Caco-2 (cell line): ENCODE measurements at regions of chr2 and their contacts with region 1.

Region 1: GRCh38 chr2:27211829-27212627 is at the starts of genes ATRAID and SLC5A6:
- DNase-seq: peak; percentile 92 to 96
- H3K4me3 ChIP-seq: peak within 1 kb of the TSS; percentile 58
- H3K4me3 Mint-ChIP-seq: peak within 1 kb of the TSS; percentile 98
- H3K27ac Mint-ChIP-seq: peak within 1 kb of the TSS; percentile 100
- H3K4me1 ChIP-seq: peaks cover 30% of the 10 kb centered on the region
- H3K4me1 Mint-ChIP-seq: peaks cover 29% of the 10 kb centered on the region
- H3K27me3 ChIP-seq: no peaks in the 10 kb centered on the region
- H3K27me3 Mint-ChIP-seq: no peaks in the 10 kb centered on the region
- CTCF ChIP-seq: no peak
- total RNA-seq, gene ATRAID: 150 and 157 TPM in 2 replicates
- total RNA-seq, gene SLC5A6: 93.7 and 98.2 TPM in 2 replicates

Region 2: GRCh38 chr2:26993768-26994167 is 218.3 kb before region 1 on chr2:
- CTCF ChIA-PET with region 1: no interaction called
- POLR2A ChIA-PET with region 1: interaction called, 11 read pairs
- intact Hi-C with region 1: no loop called
- DNase-seq: peak in 1 of 2 experiments; percentile 24
- H3K4me3 ChIP-seq: no peak overlapping the region
- H3K4me3 Mint-ChIP-seq: no peak overlapping the region
- H3K27ac Mint-ChIP-seq: no peak overlapping the region
- H3K4me1 ChIP-seq: 0 out of 2 replicates have a peak, but pooled peaks cover 6% of the 10 kb centered on the region
- H3K4me1 Mint-ChIP-seq: peaks cover 8% of the 10 kb centered on the region
- H3K27me3 ChIP-seq: no peaks in the 10 kb centered on the region
- H3K27me3 Mint-ChIP-seq: no peaks in the 10 kb centered on the region
- CTCF ChIP-seq: no peak

Region 3: DNA sequence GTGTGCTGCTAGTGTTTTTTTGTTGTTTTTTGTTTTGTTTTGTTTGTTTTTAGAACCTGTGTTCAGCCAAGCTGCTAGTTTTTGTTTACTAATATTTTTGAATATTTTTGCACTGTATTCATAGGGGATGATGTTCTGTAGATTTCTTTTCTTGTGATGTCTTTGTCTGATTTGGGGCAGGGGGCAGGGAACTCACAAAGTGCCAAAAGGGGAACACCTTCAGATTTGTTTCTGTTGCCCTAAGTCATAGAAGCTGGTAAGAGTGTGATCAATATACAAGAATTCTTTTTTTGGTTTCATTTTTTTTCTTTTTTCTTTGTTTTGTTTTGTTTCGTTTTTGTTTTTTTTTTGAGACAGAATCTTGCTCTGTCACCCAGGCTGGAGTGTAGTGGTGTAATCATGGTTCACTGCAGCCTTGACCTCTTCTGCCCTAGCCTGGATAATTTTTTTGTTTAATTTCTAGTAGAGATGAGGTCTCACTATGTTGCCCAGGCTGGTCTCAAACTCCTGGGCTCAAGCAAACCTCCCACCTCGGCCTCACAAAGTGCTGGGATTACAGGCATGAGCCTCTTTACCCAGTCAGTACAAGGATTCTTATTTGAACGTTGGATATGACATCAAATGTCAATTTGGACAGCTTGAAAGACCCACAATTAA is 32.6 kb before region 1 on chr2:
- CTCF ChIA-PET with region 1: no interaction called
- POLR2A ChIA-PET with region 1: interaction called, 15 read pairs
- intact Hi-C with region 1: no loop called
- DNase-seq: no peak
- H3K4me3 ChIP-seq: no peak overlapping the region
- H3K4me3 Mint-ChIP-seq: no peak overlapping the region
- H3K27ac Mint-ChIP-seq: no peak overlapping the region
- H3K4me1 ChIP-seq: peaks cover 5% of the 10 kb centered on the region
- H3K4me1 Mint-ChIP-seq: peaks cover 8% of the 10 kb centered on the region
- H3K27me3 ChIP-seq: no peaks in the 10 kb centered on the region
- H3K27me3 Mint-ChIP-seq: no peaks in the 10 kb centered on the region
- CTCF ChIP-seq: no peak

Region 4: GRCh38 chr2:27356382-27357181 is 144.6 kb after region 1 on chr2 and contains the start of gene GTF3C2:
- CTCF ChIA-PET with region 1: no interaction called
- POLR2A ChIA-PET with region 1: no interaction called
- intact Hi-C with region 1: loop called (anchors 2 kb)
- DNase-seq: peak; percentile 99
- H3K4me3 ChIP-seq: peak within 1 kb of the TSS; percentile 60
- H3K4me3 Mint-ChIP-seq: peak within 1 kb of the TSS; percentile 92
- H3K27ac Mint-ChIP-seq: peak within 1 kb of the TSS; percentile 98
- H3K4me1 ChIP-seq: peaks cover 24% of the 10 kb centered on the region
- H3K4me1 Mint-ChIP-seq: peaks cover 8% of the 10 kb centered on the region
- H3K27me3 ChIP-seq: no peaks in the 10 kb centered on the region
- H3K27me3 Mint-ChIP-seq: no peaks in the 10 kb centered on the region
- CTCF ChIP-seq: no peak
- total RNA-seq, gene GTF3C2: 81.0 and 91.4 TPM in 2 replicates